ENCODE measurements at regions of chr9 and their contacts with region 1.

Region 1: GRCh38 chr9:129932303-129933151 is 97.3 kb downstream of the USP20 start:
- DNase-seq: peak in 2 of 14 experiments; percentile 55 to 57
- ATAC-seq: peak; percentile 35
- H3K4me3 ChIP-seq: no peak overlapping the region
- H3K4me3 Mint-ChIP-seq: peak overlapping the region; percentile 73
- H3K27ac ChIP-seq: peak overlapping the region; percentile 3 to 31
- H3K27ac Mint-ChIP-seq: peak overlapping the region; percentile 85
- H3K4me1 ChIP-seq: peaks cover 45% of the 10 kb centered on the region
- H3K4me1 Mint-ChIP-seq: peaks cover 59% of the 10 kb centered on the region
- H3K27me3 ChIP-seq: no peaks in the 10 kb centered on the region
- H3K27me3 Mint-ChIP-seq: no peaks in the 10 kb centered on the region
- CTCF ChIP-seq: no peak

Region 2: GRCh38 chr9:129383561-129384416 is 548.7 kb before region 1 on chr9:
- CTCF ChIA-PET with region 1: no interaction called
- POLR2A ChIA-PET with region 1: no interaction called
- intact Hi-C with region 1: no loop called
- DNase-seq: peak; percentile 54 to 89 (median 73)
- ATAC-seq: peak; percentile 93
- H3K4me3 ChIP-seq: peak overlapping the region; percentile 66
- H3K4me3 Mint-ChIP-seq: peak overlapping the region; percentile 84
- H3K27ac ChIP-seq: peak overlapping the region; percentile 79 to 85
- H3K27ac Mint-ChIP-seq: peak overlapping the region; percentile 83
- H3K4me1 ChIP-seq: peaks cover 21% of the 10 kb centered on the region
- H3K4me1 Mint-ChIP-seq: peaks cover 10% of the 10 kb centered on the region
- H3K27me3 ChIP-seq: no peaks in the 10 kb centered on the region
- H3K27me3 Mint-ChIP-seq: no peaks in the 10 kb centered on the region
- CTCF ChIP-seq: no peak

Region 3: GRCh38 chr9:129900263-129901027 is 32.1 kb before region 1 on chr9:
- CTCF ChIA-PET with region 1: interaction called, 3 read pairs
- POLR2A ChIA-PET with region 1: interaction called, 3 read pairs
- intact Hi-C with region 1: loop called in 1 of 2 experiments (anchors 5 kb)
- DNase-seq: peak in 1 of 14 experiments; percentile 37
- ATAC-seq: no peak
- H3K4me3 ChIP-seq: no peak overlapping the region
- H3K4me3 Mint-ChIP-seq: no peak overlapping the region
- H3K27ac ChIP-seq: no peak overlapping the region
- H3K27ac Mint-ChIP-seq: peak overlapping the region; percentile 99
- H3K4me1 ChIP-seq: peaks cover 41% of the 10 kb centered on the region
- H3K4me1 Mint-ChIP-seq: peaks cover 65% of the 10 kb centered on the region
- H3K27me3 ChIP-seq: no peaks in the 10 kb centered on the region
- H3K27me3 Mint-ChIP-seq: no peaks in the 10 kb centered on the region
- CTCF ChIP-seq: no peak

Region 4: GRCh38 chr9:129944506-129945116 is 12.1 kb after region 1 on chr9:
- CTCF ChIA-PET with region 1: no interaction called
- POLR2A ChIA-PET with region 1: interaction called, 11 read pairs
- intact Hi-C with region 1: no loop called
- DNase-seq: peak in 13 of 14 experiments; percentile 22 to 92 (median 33)
- ATAC-seq: peak; percentile 90
- H3K4me3 ChIP-seq: no peak overlapping the region
- H3K4me3 Mint-ChIP-seq: peak overlapping the region; percentile 56
- H3K27ac ChIP-seq: peak overlapping the region; percentile 12 to 58
- H3K27ac Mint-ChIP-seq: peak overlapping the region; percentile 76
- H3K4me1 ChIP-seq: peaks cover 46% of the 10 kb centered on the region
- H3K4me1 Mint-ChIP-seq: peaks cover 67% of the 10 kb centered on the region
- H3K27me3 ChIP-seq: no peaks in the 10 kb centered on the region
- H3K27me3 Mint-ChIP-seq: no peaks in the 10 kb centered on the region
- CTCF ChIP-seq: no peak

Region 5: DNA sequence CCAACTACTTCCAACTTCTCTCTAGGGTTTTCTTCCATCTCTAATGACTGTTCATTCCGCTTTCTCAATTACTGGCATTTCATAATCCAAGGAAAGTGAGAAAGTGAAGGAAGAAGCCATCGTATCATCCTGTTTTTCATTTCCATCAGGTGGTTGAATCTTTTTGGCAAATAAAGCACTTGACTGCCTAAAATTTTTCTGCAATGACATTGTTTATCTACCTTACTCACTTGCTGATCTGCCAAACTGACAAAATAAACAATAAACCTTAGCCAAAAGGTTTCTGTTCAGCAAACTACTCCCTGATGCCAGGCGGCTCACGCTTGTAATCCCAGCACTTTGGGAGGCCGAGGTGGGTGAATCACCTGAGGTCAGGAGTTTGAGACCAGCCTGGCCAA is 92.1 kb after region 1 on chr9:
- CTCF ChIA-PET with region 1: no interaction called
- POLR2A ChIA-PET with region 1: no interaction called
- intact Hi-C with region 1: no loop called
- DNase-seq: no peak
- ATAC-seq: no peak
- H3K4me3 ChIP-seq: no peak overlapping the region
- H3K4me3 Mint-ChIP-seq: no peak overlapping the region
- H3K27ac ChIP-seq: peak overlapping the region in 1 of 2 donors; percentile 31
- H3K27ac Mint-ChIP-seq: peak overlapping the region; percentile 81
- H3K4me1 ChIP-seq: peaks cover 76% of the 10 kb centered on the region
- H3K4me1 Mint-ChIP-seq: peaks cover 98% of the 10 kb centered on the region
- H3K27me3 ChIP-seq: no peaks in the 10 kb centered on the region
- H3K27me3 Mint-ChIP-seq: no peaks in the 10 kb centered on the region
- CTCF ChIP-seq: no peak

Measured in CD4-positive, alpha-beta T cell (primary cell).